Posterior vena cava (tissue), 2 donors: ENCODE measurements at regions of chr17 and their contacts with region 1.

Region 1: GRCh38 chr17:72388765-72389473 is 268.1 kb downstream of the SOX9 start:
- DNase-seq: peak; percentile 14

Region 2: GRCh38 chr17:70863436-70864248 is 1525.3 kb before region 1 on chr17:
- intact Hi-C with region 1: loop called in 1 of 2 experiments (anchors 5 kb)
- DNase-seq: no peak

Region 3: DNA sequence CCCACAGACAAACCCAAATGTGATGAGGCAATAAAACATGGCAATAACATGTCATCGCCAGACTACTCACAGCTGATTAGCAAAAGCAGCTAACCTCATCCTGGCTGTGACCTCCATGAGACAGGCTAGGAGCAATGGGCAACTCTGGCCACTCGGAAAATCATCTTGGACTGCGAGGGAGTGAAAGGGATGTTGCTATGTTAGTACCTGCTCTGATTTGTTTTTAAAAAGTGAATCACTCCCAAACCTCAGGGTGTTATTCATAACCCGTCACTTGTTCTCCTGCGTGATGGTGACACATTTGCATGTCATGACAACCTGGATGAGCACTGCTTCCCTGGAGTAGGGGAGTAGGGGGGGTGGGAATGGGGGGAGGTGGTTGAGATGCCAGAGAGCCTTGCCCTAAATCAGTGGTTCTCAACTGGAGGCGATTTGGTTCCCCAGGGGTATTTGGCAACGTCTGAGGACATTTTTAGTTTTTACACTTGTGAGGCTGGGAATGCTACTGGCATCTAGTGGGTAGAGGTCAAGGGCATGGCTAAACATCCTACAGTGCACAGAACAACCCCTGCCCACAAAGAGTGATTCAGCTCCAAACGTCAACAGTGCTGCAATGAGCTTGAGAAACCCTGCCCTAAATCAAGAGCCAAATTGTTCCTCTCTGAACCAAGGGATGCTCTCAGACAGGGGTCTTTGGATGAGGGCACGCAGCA is 26.4 kb before region 1 on chr17:
- intact Hi-C with region 1: no loop called
- DNase-seq: no peak

Region 4: GRCh38 chr17:72456026-72456569 is 67.2 kb after region 1 on chr17:
- intact Hi-C with region 1: no loop called
- DNase-seq: peak; percentile 42

Region 5: GRCh38 chr17:72775919-72776318 is 387.0 kb after region 1 on chr17:
- intact Hi-C with region 1: no loop called
- DNase-seq: no peak